ENCODE measurements at regions of chr2 and their contacts with region 1.

Region 1: DNA sequence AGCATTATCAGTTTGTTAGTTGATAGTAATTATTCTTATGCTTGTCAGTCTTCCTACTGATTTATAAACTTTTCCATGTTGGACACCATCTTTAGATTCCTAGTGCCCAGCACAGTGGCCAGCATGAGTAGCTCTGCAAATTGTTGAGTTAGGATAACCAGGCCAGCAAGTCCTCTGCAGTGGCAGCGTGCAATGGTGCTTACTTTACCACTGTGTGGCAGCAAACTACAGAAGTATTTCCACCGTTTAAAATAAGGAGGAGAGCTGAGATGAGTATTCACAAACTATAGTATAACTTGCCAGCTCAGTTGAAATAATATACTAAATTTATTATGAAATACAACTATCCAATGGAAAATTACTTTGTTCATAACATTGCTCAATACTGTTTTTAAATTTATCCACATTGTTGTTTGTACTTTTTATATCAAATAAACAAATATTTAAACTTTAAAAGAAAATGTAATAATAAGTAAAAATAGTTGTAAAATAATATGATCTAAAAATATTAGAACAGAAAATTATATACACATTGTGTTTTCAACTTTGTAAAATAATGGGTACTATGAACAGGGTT is 9.3 kb upstream of the THADA start:
- DNase-seq: peak; percentile 61
- ATAC-seq: peak; percentile 89
- H3K4me3 ChIP-seq: no peak overlapping the region
- H3K27ac ChIP-seq: no peak overlapping the region
- H3K4me1 ChIP-seq: peaks cover 19% of the 10 kb centered on the region
- H3K27me3 ChIP-seq: 0 out of 5 replicates have a peak, but pooled peaks cover 0 to 6% of the 10 kb centered on the region in 2 experiments
- CTCF ChIP-seq: peak; percentile 81
- EP300 ChIP-seq: no peak
- POLR2A ChIP-seq: no peak
- RAD21 ChIP-seq: peak; percentile 60; the same call in 1 of the 2 replicates

Region 2: DNA sequence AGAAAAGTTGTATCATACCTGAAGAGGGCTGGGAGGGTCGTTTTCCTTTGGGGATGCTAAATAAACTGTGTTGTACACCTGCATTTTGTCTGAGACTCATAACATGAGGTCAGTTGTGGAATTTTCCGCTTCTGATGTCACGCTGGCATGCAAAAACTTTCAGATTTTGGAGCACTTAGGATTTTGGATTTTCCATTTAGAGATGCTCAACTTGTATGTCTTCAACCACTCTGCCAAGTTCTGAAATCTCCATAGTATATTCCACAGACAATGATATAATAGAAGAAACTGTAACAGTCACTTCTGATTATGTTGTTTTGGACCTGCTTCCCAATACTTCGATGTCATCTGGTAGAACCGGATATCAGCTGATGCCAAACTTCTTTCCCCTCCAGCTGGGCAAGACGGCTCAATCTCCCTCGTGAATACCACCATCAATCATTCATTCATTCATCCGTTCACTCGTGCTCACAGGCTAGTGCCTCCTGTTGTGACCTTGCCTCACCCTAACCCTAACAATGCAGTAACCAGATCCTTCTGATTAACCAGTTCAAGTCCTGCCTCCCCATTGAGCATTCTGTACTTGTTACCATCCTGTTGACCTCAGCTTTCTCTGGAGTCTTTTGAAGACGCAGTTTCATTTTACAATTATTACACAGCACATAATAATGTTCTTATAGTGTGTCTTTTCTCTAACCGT is 26.6 kb after region 1 on chr2:
- CTCF ChIA-PET with region 1: no interaction called
- POLR2A ChIA-PET with region 1: no interaction called
- in situ Hi-C with region 1: no loop called
- intact Hi-C with region 1: loop called (anchors 2 kb)
- DNase-seq: no peak
- ATAC-seq: no peak
- H3K4me3 ChIP-seq: no peak overlapping the region
- H3K27ac ChIP-seq: no peak overlapping the region
- H3K4me1 ChIP-seq: peaks cover 70% of the 10 kb centered on the region
- H3K27me3 ChIP-seq: peaks cover 0 to 27% of the 10 kb centered on the region in 2 experiments; a peak in 3 of 5 replicates
- CTCF ChIP-seq: no peak
- EP300 ChIP-seq: no peak
- POLR2A ChIP-seq: no peak
- RAD21 ChIP-seq: no peak

Region 3: DNA sequence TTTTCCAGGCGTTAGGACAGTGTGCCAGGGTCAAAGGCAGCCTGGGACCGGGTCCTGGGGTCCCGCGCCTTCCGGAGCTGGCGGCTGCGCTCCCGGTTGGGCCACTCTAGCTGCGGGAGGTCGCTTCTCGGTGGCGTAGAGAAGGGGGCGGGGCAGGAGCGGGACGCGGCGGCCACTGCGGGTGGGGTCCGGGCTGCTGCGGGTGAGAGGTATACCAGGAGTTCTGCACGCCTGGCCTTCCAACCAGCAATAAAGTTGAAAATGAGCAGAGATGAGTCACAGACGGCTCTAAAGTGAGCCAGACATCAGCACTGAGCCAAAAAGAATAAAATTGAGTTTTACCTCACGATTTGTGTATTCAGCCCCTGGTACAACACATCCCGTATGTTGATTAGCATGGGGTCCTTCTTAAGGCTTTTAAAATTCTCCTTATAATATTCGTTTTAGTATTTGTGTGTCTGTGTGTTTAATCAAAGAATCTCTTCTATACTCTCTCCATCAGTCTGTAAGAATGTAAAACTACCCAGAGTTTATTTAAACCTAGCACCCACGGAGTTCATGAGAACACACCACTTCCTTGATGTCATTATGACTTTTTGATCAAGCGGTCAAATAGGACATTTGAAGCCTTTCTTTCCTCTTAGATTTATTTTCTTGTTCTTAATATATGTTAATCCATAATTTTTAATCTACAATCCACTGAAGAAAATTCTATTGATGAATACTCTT is 71.3 kb after region 1 on chr2 and contains the start of gene C1GALT1C1L:
- CTCF ChIA-PET with region 1: no interaction called
- POLR2A ChIA-PET with region 1: no interaction called
- in situ Hi-C with region 1: no loop called
- intact Hi-C with region 1: no loop called
- DNase-seq: peak; percentile 22
- ATAC-seq: peak; percentile 98
- H3K4me3 ChIP-seq: peak within 1 kb of the TSS; percentile 58 to 75 (median 68)
- H3K27ac ChIP-seq: no peak within 1 kb of the TSS
- H3K4me1 ChIP-seq: peaks cover 17% of the 10 kb centered on the region
- H3K27me3 ChIP-seq: no peaks in the 10 kb centered on the region
- CTCF ChIP-seq: no peak
- EP300 ChIP-seq: no peak
- POLR2A ChIP-seq: peak in 1 of 2 experiments; percentile 58; a peak in 2 of 4 replicates
- RAD21 ChIP-seq: no peak
- total RNA-seq, gene C1GALT1C1L: 0.91 and 1.3 TPM in 2 replicates